ENCODE measurements at regions of chr16 and their contacts with region 1.

Region 1: DNA sequence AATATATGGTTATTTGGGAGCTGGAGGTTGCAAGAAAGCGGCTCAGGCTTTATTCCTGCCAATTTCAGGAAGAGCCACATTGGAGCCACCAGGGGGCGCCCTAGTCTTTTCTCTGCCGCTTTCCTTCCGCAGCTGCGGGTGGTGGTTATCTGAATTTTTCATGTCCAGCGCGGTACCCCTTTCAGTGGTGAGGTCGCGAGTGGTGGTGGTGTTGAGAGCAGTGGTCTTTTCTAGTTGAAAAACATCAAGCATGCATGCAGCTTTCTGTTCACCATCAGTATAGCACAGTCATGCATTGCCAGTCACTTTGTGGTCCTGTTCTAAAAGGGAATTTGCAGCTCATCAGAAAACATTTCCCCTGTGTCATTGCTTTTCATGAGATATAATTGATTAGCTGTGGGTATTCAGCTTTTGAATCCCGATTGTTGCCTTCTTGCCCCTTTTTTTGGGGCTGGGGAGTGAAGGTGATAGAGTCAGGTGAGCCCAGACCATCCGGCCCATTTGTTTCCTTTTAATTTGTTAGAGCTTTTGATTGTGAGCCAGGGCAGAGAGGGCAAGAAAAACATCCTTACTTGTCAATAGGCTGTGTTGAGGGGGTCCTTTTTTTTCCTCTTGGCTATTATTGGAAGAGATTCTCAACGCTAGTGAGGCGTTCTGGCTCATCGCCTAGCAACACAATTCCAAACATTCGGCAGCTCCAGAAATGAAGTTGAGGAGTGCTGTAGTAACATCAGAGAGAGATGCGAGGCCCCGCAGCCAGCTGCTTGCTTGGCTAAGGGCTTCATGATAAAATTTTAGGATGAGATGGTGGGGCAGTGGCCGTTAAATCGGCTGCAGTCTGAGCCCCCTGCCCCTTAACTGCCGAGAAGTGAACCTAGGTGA is 119.0 kb downstream of the SNX29 start:
- DNase-seq: peak; percentile 83
- H3K4me3 ChIP-seq: peak overlapping the region in 3 of 4 donors; percentile 11 to 30 (median 24)
- H3K27ac ChIP-seq: peak overlapping the region; percentile 14 to 60 (median 27)
- H3K4me1 ChIP-seq: peaks cover 2 to 45% (median 31%) of the 10 kb centered on the region in 4 donors
- H3K27me3 ChIP-seq: no peaks in the 10 kb centered on the region
- CTCF ChIP-seq: peak; percentile 46 to 90 (median 82)
- EP300 ChIP-seq: no peak
- POLR2A ChIP-seq: no peak

Region 2: DNA sequence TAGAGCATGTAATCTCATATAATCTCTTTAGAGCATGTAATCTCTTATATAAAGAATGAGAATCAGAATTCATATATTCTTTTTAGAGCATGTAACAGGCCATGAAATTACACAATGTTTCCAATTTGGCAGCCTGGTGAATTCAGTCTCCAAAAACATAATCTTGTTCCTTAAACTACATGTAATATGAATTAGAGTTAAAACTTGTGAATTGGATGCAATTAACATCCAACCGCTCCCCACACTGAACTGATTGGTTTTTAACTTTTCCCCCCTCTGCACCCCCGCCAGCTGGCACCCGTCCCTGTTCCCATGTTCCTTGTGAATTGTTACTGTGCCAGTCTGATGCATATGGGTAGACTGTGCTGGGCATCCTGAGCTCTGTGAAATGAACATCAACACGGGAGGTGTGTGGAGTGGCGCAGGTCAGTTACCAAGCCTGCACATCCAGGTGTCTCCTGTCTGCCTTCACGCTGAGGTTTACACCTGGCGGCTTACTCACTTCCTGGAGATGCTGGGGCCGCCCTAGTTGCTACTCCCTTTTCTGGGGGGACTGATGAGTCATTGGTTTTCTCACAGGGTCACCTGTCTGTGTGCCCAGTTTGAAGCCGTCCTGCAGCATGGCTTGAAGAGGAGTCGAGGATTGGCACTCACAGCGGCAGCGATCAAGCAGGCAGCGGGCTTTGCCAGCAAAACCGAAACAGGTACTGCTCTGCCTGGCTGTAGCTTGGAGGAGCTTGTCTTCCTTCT is 68.6 kb before region 1 on chr16:
- intact Hi-C with region 1: no loop called
- DNase-seq: no peak
- H3K4me3 ChIP-seq: no peak overlapping the region
- H3K27ac ChIP-seq: no peak overlapping the region
- H3K4me1 ChIP-seq: no peaks in the 10 kb centered on the region
- H3K27me3 ChIP-seq: no peaks in the 10 kb centered on the region
- CTCF ChIP-seq: no peak
- EP300 ChIP-seq: no peak
- POLR2A ChIP-seq: no peak

Region 3: GRCh38 chr16:12079412-12079965 is 16.0 kb before region 1 on chr16:
- intact Hi-C with region 1: no loop called
- DNase-seq: no peak
- H3K4me3 ChIP-seq: no peak overlapping the region
- H3K27ac ChIP-seq: no peak overlapping the region
- H3K4me1 ChIP-seq: no peaks in the 10 kb centered on the region
- H3K27me3 ChIP-seq: no peaks in the 10 kb centered on the region
- CTCF ChIP-seq: no peak
- EP300 ChIP-seq: no peak
- POLR2A ChIP-seq: no peak

Region 4: DNA sequence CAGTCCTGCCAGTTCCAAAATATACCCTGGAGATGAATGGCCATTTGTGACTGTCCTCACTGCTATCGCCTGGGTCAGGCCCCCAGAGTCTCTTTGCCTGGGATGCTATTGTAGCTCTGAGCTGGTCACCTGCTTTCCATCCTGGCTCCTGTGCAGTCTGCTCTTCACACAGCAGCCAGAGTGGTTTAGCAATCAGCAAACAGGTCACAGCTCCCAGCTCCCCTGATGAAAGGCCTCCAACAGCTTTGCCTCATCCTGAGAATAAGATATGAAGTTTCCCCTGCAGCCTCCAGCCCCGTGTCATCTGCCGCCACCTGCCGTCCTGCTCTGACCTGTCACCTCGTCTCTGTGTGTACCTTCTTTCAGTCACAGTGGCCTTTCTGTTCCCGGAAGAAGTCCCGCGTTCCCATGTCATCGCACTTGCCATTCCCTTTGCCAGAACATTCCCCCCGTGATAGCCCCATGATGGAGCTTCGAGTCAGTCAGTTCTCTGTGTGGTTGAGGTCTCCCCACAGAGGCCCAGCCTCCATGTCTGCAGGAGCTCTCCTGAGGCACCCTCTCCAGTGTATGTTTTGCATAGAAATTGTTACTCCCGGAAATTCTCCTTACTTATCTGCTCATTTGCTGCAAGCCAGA is 162.5 kb after region 1 on chr16:
- intact Hi-C with region 1: loop called (anchors 10 kb)
- DNase-seq: no peak
- H3K4me3 ChIP-seq: no peak overlapping the region
- H3K27ac ChIP-seq: no peak overlapping the region
- H3K4me1 ChIP-seq: peaks cover 0 to 11% (median 7%) of the 10 kb centered on the region in 4 donors
- H3K27me3 ChIP-seq: no peaks in the 10 kb centered on the region
- CTCF ChIP-seq: no peak
- EP300 ChIP-seq: no peak
- POLR2A ChIP-seq: no peak

Region 5: DNA sequence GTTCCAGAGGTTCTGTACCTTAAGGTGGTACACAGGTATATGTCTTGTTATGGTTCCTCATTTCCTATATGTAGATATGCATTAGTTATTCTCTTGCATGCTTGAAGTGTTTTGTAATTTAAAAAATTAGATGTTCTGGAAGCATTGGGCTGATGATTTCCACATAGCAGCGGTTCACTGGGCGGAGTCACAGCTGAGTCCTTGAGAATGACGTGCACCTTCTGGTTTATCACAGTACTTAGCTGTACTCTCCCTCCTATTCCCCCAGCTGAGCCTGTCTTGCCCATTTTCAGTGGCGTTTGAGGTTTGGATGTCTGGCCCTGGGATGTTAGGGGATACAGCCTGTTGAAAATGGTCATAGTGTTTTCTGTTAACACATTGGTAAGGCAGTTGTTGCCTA is 208.1 kb after region 1 on chr16:
- intact Hi-C with region 1: loop called (anchors 10 kb)
- DNase-seq: no peak
- H3K4me3 ChIP-seq: no peak overlapping the region
- H3K27ac ChIP-seq: no peak overlapping the region
- H3K4me1 ChIP-seq: peaks cover 0 to 19% (median 12%) of the 10 kb centered on the region in 4 donors
- H3K27me3 ChIP-seq: no peaks in the 10 kb centered on the region
- CTCF ChIP-seq: no peak
- EP300 ChIP-seq: no peak
- POLR2A ChIP-seq: no peak

Region 6: DNA sequence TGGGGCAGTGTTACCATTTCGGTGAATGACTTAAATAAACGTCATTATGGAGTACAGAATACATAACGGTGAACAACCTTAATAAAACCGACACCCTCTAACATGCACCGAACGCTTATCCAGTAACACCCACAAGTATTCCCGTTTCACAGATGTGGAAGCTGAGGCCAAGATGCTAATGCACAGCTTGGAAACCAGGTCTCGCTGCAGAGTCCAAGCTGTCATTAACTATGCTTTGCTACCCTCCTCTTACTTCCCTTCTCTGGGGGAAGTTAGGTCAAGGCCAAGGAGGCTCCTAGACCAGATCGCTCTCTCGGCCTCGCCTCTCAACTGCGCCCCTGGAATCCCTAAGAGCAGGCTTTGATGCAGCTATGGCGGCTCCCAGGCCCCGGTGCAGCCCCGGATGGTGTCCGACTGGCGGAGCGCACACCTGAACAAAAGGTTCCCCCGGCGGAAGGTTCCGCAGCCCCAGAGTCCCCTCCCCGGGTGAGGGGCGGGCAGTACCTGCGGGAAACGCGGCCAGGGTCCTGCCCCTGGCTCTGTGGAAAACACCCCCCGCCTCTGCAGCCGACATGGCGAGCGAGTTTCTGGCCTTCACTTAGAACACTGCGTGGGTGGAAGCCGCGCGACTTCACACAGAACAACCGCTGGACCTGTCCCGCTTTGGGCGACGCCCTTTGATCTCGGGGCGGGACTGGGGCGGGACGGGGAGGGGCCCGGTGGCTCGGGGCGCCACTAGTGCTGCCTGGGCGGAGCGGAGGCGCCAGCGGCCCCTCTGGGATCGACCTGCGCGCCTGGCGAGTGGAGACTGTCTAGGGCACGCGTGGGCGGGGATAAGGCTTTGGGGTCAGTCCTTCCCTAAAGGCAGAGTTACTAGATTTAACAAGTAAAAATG is 707.9 kb after region 1 on chr16 and contains the start of gene CPPED1:
- intact Hi-C with region 1: loop called (anchors 5 kb)
- DNase-seq: peak; percentile 94
- H3K4me3 ChIP-seq: peak within 1 kb of the TSS; percentile 51 to 66 (median 60)
- H3K27ac ChIP-seq: peak within 1 kb of the TSS; percentile 77 to 81 (median 80)
- H3K4me1 ChIP-seq: peaks cover 0 to 26% (median 11%) of the 10 kb centered on the region in 4 donors
- H3K27me3 ChIP-seq: no peaks in the 10 kb centered on the region
- CTCF ChIP-seq: no peak
- EP300 ChIP-seq: peak in 1 of 4 donors; percentile 17
- POLR2A ChIP-seq: peak in 1 of 2 donors; percentile 14
- total RNA-seq, gene CPPED1: 10.0 to 23.8 (median 11.3) TPM

Region 7: GRCh38 chr16:12819126-12820117 is 723.9 kb after region 1 on chr16:
- intact Hi-C with region 1: loop called (anchors 5 kb)
- DNase-seq: peak; percentile 74
- H3K4me3 ChIP-seq: no peak overlapping the region
- H3K27ac ChIP-seq: no peak overlapping the region
- H3K4me1 ChIP-seq: no peaks in the 10 kb centered on the region
- H3K27me3 ChIP-seq: no peaks in the 10 kb centered on the region
- CTCF ChIP-seq: peak; percentile 41 to 77 (median 74)
- EP300 ChIP-seq: no peak
- POLR2A ChIP-seq: no peak

Region 8: DNA sequence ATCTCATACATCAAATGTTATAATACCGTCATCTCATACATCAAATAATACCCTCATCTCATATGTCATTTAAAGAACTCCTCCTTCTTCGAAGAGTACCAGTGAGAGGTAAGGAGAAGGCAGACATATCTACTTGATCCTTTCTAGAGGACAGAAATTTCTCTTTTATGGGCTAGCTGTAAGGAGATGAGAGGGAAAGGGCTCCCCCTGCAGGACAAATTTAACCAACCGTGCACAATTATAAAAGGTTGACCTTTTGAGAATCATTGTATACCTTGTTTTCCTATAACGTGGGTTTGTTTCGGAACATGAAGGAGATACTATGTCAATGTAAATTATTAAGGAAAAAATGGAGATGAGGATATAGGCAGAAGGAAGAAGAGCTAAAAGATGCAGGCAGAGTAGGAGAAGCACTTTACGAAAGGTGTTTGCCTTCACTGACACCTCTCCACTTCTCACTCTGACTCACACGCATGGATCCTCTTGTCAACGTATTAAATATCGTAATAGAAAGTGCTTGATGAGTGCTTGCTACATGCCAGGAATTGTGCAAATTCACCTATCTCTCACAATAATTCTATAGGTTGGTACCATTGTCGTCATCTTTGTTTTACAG is 1358.5 kb after region 1 on chr16:
- intact Hi-C with region 1: loop called (anchors 10 kb)
- DNase-seq: no peak
- H3K4me3 ChIP-seq: no peak overlapping the region
- H3K27ac ChIP-seq: no peak overlapping the region
- H3K4me1 ChIP-seq: no peaks in the 10 kb centered on the region
- H3K27me3 ChIP-seq: no peaks in the 10 kb centered on the region
- CTCF ChIP-seq: peak in 1 of 4 experiments; percentile 23
- EP300 ChIP-seq: no peak
- POLR2A ChIP-seq: no peak